ENCODE measurements at regions of chr11 and their contacts with region 1.

Region 1: GRCh38 chr11:29448246-29448877 is 568.5 kb downstream of the KCNA4 start:
- DNase-seq: no peak
- ATAC-seq: peak; percentile 56

Region 2: GRCh38 chr11:29333993-29334775 is 114.2 kb before region 1 on chr11:
- intact Hi-C with region 1: no loop called
- DNase-seq: no peak
- ATAC-seq: no peak

Region 3: DNA sequence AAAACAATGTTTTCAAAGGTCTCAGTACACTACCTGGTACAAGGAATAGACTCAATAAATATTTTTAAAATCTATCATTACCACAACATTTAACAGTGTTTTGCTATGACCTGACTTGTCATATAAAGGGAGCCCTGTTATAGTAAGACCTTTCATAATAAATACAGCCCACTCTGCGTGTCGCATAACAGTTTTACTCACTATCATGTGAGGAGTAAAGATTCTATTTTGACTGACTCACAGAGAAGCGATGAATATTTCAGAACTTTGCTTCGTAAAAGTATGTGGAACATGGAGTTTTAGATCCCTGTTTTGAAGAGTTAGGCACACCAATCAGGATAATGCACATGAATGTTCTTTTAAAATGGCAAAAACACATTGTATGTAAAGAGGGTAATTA is 37.3 kb after region 1 on chr11:
- intact Hi-C with region 1: no loop called
- DNase-seq: no peak
- ATAC-seq: no peak

Region 4: GRCh38 chr11:29616611-29617010 is 168.2 kb after region 1 on chr11:
- intact Hi-C with region 1: no loop called
- DNase-seq: no peak
- ATAC-seq: no peak

Region 5: DNA sequence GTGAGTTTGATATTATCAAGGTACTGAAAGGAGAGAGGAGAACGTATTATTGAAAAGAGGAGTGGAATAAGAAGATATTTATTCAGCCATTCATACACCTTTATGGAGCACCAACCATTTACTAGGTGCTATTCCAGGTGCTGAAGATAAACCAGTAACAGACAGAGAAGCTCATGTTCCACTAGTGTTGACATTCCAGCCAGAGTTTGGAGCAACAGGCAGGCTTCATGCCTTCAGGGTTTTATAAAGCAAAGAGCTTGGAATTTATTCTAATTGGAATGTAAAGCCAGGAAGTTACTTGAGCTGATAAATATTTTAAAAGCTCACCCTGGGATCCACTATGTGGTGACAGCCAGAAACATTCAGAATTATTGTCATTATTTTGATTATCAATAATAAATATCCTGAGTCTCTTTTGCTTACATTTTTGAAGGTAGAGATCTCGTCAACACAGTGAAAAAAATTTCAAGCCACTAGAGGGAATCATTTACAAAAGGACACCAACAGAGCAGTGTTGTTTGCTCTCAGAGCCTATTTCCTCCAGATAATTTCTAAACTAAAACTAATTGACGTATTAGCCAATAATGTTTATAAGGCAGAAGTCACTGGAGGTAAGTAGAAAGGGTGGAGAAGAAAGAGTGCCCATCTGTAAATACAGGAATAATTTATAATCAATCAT is 396.5 kb after region 1 on chr11:
- intact Hi-C with region 1: loop called (anchors 10 kb)
- DNase-seq: no peak
- ATAC-seq: peak; percentile 35

Region 6: GRCh38 chr11:29937526-29937925 is 489.2 kb after region 1 on chr11:
- intact Hi-C with region 1: loop called (anchors 5 kb)
- DNase-seq: no peak
- ATAC-seq: no peak